Activated CD4-positive, alpha-beta T cell treated with anti-CD3 and anti-CD28 coated beads, Interleukin-2, amount 10 ng/mL, durations not matched to agents 24 days and 14 days (primary cell): ENCODE measurements at regions of chr3 and their contacts with region 1.

Region 1: DNA sequence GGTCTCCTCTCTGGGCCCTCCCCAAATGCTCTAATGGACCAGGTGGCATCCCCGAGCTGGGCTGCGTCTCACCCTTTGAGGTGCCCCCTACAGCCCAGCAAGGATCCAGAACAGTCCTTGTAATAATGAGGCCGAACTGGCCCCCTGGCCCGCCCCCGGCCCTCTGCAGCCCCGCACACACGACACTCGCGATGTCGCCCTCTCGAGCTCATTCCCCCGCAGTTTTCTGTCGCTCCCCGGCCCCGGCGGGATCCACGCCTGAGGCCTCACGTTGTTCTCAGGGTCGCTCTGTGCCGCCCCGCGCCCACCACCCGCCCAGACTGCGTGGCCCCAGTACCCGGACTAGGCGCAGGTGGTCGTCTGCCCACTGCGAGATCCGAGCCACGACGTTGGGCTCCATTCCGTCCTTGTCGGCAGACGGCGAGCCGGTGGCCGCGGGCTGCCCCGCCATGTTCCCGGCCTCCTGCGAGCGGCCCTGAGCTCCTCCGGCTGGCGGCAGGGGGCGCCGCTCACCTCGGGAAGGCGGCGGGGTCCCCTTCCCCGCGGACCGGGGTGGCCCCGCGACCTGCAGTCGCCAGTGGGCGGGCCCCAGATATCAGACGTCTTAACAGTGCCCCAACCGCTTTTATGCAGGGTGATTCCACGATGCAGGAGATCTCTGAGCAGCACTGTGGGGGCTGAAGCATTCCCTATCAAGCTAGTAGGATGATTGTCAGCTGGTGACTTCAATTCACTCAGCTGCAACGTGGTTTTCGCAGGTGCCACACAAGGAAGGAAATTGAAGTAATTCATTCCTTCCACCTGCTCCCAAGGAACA is at the start of gene C3orf33:
- DNase-seq: peak; percentile 93
- H3K4me3 Mint-ChIP-seq: peak within 1 kb of the TSS; percentile 89
- H3K27ac Mint-ChIP-seq: peak within 1 kb of the TSS; percentile 75
- H3K4me1 Mint-ChIP-seq: peaks cover 10% of the 10 kb centered on the region
- H3K27me3 Mint-ChIP-seq: peaks cover 13% of the 10 kb centered on the region
- total RNA-seq, gene C3orf33: 1.6 and 2.1 TPM in 2 replicates

Region 2: DNA sequence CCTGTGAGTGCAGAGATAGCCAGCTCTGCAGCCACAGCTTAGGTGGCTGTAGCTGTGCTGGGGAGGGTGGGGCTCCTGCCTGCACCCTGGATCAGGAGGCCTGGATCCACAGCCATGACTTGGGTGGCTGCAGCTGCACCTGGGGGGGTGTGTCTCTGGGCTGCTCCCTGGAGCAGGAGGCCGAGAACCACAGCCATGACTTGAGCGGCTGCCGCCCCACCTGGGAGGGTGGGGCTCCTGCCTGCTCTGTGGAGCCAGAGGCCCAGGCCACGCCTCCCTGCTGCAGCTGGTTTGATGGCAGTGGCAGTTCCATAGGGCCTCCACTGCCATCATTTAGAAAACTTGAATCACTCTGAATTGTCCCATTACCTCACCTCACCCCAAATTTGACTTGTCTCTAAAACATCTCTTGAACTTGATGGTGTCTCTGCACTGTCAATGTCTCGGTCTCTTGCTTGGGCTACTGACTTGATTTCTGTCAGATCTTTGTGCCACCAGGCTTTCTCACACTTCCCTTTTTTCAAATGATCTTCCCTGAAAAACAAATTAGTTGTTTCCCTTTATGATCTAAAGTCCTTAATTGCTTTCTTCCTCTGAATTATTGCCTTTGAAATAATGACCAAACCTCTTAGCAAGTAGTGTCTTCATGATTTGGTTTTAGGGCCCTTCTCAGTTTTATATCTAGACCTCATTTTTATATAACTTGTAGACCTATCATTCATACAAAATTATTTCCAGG is 1039.1 kb before region 1 on chr3:
- intact Hi-C with region 1: no loop called
- DNase-seq: no peak
- H3K4me3 Mint-ChIP-seq: no peak overlapping the region
- H3K27ac Mint-ChIP-seq: no peak overlapping the region
- H3K4me1 Mint-ChIP-seq: no peaks in the 10 kb centered on the region
- H3K27me3 Mint-ChIP-seq: no peaks in the 10 kb centered on the region

Region 3: GRCh38 chr3:155870133-155870944 is 64.3 kb after region 1 on chr3 and contains the start of gene GMPS:
- intact Hi-C with region 1: loop called (anchors 1 kb)
- DNase-seq: no peak
- H3K4me3 Mint-ChIP-seq: peak within 1 kb of the TSS; percentile 88
- H3K27ac Mint-ChIP-seq: peak within 1 kb of the TSS; percentile 96
- H3K4me1 Mint-ChIP-seq: peaks cover 19% of the 10 kb centered on the region
- H3K27me3 Mint-ChIP-seq: no peaks in the 10 kb centered on the region
- total RNA-seq, gene GMPS: 150 and 151 TPM in 2 replicates